GM13976 (cell line): ENCODE measurements at regions of chr1 and their contacts with region 1.

Region 1: GRCh38 chr1:241834733-241835377 is 13.1 kb upstream of the EXO1 start:
- DNase-seq: no peak
- CTCF ChIP-seq: peak; percentile 38

Region 2: DNA sequence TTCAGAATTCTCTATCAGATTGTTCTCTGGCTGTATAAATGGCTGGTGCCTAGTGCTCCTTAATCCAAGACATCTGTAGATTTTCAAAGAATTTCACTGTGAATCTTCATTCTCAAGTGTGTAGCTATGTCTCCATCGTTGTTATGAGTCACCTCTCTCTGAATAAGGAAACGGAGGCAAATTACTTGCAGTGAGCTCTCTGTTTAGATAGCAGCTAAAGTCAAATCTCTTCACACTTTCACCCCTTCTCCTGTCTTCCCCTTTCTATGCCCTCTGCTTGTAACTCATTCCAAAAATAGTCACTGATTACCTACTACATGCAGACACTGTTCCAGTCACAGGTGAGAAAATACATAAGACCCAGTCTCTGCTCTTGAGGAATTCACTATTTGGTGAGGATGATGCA is 234.4 kb before region 1 on chr1:
- in situ Hi-C with region 1: no loop called
- DNase-seq: peak; percentile 19
- CTCF ChIP-seq: no peak

Region 3: DNA sequence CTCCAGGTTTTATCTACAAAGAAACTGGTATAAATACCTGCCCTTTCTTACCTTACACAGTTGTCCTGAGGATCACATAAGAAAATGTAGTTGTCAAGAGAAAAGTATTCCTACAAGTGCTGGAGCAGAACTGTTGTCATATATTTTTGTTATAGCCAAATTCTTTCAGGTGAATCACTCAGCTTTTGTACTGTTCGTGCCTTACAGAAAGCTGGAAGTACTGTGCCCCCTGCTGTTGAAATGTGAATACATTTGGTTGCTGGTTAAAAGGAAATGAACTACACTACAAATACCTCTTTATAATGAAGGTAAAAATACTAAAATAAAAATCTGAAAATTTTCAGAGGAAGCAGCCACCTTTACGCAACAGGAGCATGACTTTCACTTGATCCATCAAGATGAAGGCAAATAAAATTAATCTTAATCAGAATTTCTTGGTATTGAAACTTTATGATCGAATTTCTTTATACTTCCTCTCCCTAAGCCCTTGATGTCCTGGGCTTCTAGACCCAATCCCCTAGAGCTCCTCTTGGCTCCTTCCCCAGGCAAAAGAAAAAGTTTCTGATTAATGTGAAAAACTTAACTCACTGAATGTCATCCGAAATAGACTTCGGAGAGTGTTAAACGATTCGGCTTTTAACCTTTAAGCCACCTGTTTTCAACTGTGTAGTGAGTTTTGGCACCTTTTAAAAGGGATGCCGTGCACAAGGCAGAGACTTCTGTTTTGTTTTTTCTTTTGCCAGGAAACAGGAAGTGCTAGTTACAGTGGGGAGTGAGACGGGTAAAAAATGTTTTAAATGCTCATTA is 207.2 kb before region 1 on chr1:
- in situ Hi-C with region 1: loop called (anchors 10 kb)
- DNase-seq: peak; percentile 36
- CTCF ChIP-seq: peak; percentile 31

Region 4: GRCh38 chr1:241749408-241749763 is 85.5 kb before region 1 on chr1:
- in situ Hi-C with region 1: no loop called
- DNase-seq: no peak
- CTCF ChIP-seq: no peak

Region 5: DNA sequence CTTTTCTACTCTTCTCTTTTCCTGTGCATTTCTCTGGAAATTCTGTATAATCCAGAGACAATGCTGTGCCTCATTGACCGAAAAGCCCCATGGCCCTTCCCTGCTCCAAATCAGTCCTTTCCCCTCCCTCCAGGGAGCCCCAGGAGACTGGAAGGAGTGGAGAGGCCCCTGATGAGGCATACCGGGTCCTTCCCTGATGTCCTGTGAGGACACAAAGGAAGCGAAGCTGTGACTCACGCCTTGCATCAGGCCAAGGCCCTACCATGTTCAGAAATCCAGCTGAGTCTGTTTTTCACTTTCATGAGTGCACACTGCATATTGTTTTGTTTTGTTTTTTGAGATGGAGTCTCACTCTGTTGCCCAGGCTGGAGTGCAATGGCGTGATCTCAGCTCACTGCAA is 84.0 kb after region 1 on chr1:
- in situ Hi-C with region 1: no loop called
- DNase-seq: no peak
- CTCF ChIP-seq: no peak